ENCODE measurements at regions of chr14 and their contacts with region 1.

Region 1: DNA sequence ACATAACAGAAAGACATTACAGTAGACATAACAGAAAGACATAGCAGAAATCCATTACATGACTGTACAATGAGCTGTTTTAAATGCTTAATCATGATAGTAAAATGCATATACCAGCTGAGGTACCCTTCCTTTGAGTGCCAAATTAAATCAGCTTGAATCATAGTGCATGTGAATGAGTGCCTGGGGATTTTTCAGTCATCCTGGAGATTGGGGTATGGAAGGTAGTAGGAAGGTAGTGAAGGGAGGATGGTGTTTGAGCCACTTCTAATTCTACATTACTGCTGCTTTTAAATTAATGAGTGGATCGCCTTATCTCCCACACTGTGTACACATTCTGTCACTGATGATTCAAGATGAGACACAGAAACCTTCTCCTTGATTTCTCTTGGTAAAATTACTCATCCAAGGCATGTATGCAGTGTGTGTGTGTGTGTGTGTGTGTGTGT is 534.2 kb downstream of the LRFN5 start:
- DNase-seq: peak; percentile 71
- H3K4me3 ChIP-seq: no peak overlapping the region
- H3K27ac ChIP-seq: peak overlapping the region; percentile 72
- H3K4me1 ChIP-seq: peaks cover 20% of the 10 kb centered on the region
- H3K27me3 ChIP-seq: no peaks in the 10 kb centered on the region
- CTCF ChIP-seq: no peak

Region 2: GRCh38 chr14:42047421-42048055 is 93.3 kb before region 1 on chr14:
- CTCF ChIA-PET with region 1: no interaction called
- dilution Hi-C with region 1: no loop called
- in situ Hi-C with region 1: no loop called
- intact Hi-C with region 1: no loop called
- DNase-seq: no peak
- H3K4me3 ChIP-seq: no peak overlapping the region
- H3K27ac ChIP-seq: no peak overlapping the region
- H3K4me1 ChIP-seq: no peaks in the 10 kb centered on the region
- H3K27me3 ChIP-seq: no peaks in the 10 kb centered on the region
- CTCF ChIP-seq: no peak

Region 3: GRCh38 chr14:42214981-42215491 is 74.2 kb after region 1 on chr14:
- CTCF ChIA-PET with region 1: no interaction called
- dilution Hi-C with region 1: no loop called
- in situ Hi-C with region 1: no loop called
- intact Hi-C with region 1: loop called (anchors 2 kb)
- DNase-seq: peak; percentile 92
- H3K4me3 ChIP-seq: no peak overlapping the region
- H3K27ac ChIP-seq: peak overlapping the region; percentile 98
- H3K4me1 ChIP-seq: peaks cover 21% of the 10 kb centered on the region
- H3K27me3 ChIP-seq: no peaks in the 10 kb centered on the region
- CTCF ChIP-seq: no peak

Measured in mammary epithelial cell (primary cell).